Activated CD4-positive, alpha-beta memory T cell treated with anti-CD3 and anti-CD28 coated beads for 36 hours (primary cell): ENCODE measurements at regions of chr2 and their contacts with region 1.

Region 1: DNA sequence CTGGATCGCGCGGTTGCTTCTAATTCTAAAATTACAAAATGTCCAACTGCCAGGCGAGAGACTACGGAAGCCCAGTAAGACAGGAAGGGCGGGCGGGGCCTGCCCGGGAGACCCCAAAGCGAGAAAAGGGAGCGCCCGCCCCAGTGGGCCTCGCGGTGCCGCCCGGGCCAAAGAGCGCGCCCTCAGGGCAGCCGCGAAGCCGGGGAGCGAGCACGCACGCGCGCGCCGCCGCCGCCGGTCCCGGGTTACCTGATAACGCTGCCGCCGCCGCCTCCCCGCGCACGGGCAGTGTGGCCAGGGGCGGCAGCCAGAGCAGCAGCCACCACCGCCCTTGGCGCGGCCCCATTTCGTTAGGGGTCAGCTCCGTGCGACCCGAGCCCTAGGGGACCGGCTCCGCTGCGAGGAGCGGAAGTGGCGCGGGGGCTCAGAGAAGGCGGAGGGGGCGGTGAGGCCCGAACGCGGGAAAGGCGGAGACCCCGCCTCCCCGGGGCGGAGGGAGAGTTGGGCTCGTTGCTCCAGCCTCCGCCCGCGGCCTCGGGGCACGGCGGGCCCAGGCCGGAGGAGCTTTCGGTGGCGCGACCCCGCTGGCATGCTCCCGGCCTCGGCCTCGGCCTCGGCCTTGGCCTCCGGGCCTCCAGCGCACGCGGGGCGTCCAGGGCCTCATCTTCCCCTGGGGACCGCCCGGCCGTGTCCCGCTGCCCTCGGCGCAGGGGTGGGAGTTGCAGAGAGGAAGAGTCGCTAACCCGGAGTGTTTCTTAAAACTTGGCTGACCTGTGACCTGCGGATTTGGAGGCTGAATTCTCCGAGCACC is at the start of gene NEMP2:
- DNase-seq: peak; percentile 86
- H3K4me3 Mint-ChIP-seq: peak within 1 kb of the TSS; percentile 95
- H3K27ac Mint-ChIP-seq: peak within 1 kb of the TSS; percentile 99
- H3K4me1 Mint-ChIP-seq: peaks cover 57% of the 10 kb centered on the region
- H3K27me3 Mint-ChIP-seq: no peaks in the 10 kb centered on the region
- total RNA-seq, gene NEMP2: 28.8 to 30.0 TPM

Region 2: GRCh38 chr2:189762551-189763298 is 771.8 kb before region 1 on chr2 and contains the start of gene OSGEPL1:
- CTCF ChIA-PET with region 1: no interaction called
- POLR2A ChIA-PET with region 1: no interaction called
- intact Hi-C with region 1: loop called (anchors 5 kb)
- DNase-seq: peak; percentile 95
- H3K4me3 Mint-ChIP-seq: peak within 1 kb of the TSS; percentile 91
- H3K27ac Mint-ChIP-seq: peak within 1 kb of the TSS; percentile 96
- H3K4me1 Mint-ChIP-seq: peaks cover 9% of the 10 kb centered on the region
- H3K27me3 Mint-ChIP-seq: no peaks in the 10 kb centered on the region
- total RNA-seq, gene OSGEPL1: 11.1 to 11.7 TPM

Region 3: DNA sequence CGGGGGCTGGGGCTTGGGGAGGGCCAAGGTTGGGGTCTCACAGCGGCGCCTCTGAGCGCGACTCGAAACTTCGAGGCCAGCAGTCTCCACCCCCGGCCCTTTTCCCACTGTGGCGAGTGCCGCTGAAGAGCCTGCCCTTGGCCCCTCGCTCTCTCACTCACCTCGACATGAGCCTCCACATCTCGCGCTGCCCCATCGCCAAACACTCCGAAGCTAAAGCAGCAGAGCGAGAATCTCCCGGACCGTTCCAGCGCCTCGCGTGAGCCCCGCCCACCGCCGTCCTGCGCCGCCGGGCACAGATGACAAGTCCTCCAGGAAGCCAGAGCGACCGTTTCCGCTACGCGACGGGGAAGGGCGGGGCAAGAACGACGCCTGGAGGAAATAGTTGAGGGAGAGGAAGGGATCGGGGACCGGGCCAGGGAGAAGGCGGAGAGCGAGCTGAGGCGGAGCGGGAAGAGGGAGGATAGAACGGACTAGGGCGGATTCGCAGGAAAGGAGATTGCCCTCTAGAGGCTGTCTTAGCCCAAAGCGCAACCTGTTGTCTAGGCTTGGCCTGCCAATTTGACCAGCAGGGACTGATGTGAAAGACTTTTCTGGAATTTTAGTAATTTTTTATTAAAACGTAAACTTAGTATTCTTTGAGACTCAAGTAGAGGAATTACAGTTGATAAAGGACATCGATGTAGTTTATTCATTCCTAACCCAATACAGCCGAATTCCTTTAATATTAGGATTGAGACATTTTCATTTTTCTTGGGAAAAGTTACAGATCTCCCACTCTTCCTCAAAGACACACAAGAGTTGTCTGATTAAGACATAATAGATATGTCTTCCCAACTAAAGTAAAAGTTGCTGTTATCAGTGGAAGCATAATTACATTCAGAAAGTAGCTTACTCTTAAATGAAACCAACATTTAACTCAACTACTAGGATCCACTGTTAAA is 214.7 kb before region 1 on chr2 and contains the start of gene HIBCH:
- CTCF ChIA-PET with region 1: no interaction called
- POLR2A ChIA-PET with region 1: interaction called, 3 read pairs
- intact Hi-C with region 1: loop called (anchors 1 kb)
- DNase-seq: peak; percentile 96
- H3K4me3 Mint-ChIP-seq: peak within 1 kb of the TSS; percentile 87
- H3K27ac Mint-ChIP-seq: peak within 1 kb of the TSS; percentile 94
- H3K4me1 Mint-ChIP-seq: peaks cover 52% of the 10 kb centered on the region
- H3K27me3 Mint-ChIP-seq: no peaks in the 10 kb centered on the region
- total RNA-seq, gene HIBCH: 33.9 to 37.8 TPM

Region 4: DNA sequence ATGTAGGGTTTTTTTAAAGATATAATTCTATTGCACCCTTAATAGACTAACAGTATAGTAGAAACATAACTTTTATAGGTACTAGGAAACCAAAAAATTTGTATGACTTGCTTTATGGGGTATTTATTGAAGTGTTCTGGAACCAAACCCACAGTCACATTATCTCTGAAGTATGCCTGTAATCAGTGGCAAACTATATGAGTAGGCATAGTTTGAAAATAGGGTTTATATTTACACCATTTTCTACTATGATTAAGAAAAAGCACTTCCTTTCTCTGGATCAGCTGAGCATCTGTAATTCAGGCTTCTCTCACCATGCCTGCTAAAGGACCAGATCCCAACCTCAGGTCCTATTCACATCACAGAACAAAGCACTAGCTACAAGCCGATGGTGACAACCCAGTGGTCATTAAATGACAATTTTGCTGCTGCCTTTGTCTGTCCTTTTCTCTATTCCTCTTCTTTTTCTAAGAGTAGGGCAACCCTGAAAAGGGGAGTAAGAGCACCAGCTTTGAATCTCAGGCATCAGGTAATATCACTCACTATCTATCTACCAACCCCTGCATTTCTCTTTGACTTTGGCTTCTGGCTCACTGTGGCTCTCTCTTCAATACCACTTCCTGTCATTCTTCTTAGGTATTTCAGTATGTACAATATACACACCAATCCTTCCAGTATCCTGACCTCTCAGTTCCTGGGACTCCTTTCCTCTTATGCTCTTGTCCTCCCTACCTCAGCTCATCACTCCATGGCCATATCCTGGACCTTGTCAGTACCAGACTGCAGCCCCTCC is 14.3 kb before region 1 on chr2:
- CTCF ChIA-PET with region 1: interaction called, 4 read pairs
- POLR2A ChIA-PET with region 1: interaction called, 4 read pairs
- intact Hi-C with region 1: loop called (anchors 1 kb)
- DNase-seq: no peak
- H3K4me3 Mint-ChIP-seq: no peak overlapping the region
- H3K27ac Mint-ChIP-seq: peak overlapping the region; percentile 33
- H3K4me1 Mint-ChIP-seq: peaks cover 48% of the 10 kb centered on the region
- H3K27me3 Mint-ChIP-seq: no peaks in the 10 kb centered on the region

Region 5: GRCh38 chr2:190648289-190649034 is 113.9 kb after region 1 on chr2:
- CTCF ChIA-PET with region 1: no interaction called
- POLR2A ChIA-PET with region 1: interaction called, 3 read pairs
- intact Hi-C with region 1: loop called (anchors 1 kb)
- DNase-seq: peak; percentile 85
- H3K4me3 Mint-ChIP-seq: peak overlapping the region; percentile 75
- H3K27ac Mint-ChIP-seq: peak overlapping the region; percentile 82
- H3K4me1 Mint-ChIP-seq: peaks cover 38% of the 10 kb centered on the region
- H3K27me3 Mint-ChIP-seq: no peaks in the 10 kb centered on the region

Region 6: GRCh38 chr2:190791347-190791975 is 256.9 kb after region 1 on chr2:
- CTCF ChIA-PET with region 1: no interaction called
- POLR2A ChIA-PET with region 1: no interaction called
- intact Hi-C with region 1: loop called (anchors 5 kb)
- DNase-seq: peak; percentile 73
- H3K4me3 Mint-ChIP-seq: no peak overlapping the region
- H3K27ac Mint-ChIP-seq: peak overlapping the region; percentile 61
- H3K4me1 Mint-ChIP-seq: peaks cover 55% of the 10 kb centered on the region
- H3K27me3 Mint-ChIP-seq: no peaks in the 10 kb centered on the region

Region 7: DNA sequence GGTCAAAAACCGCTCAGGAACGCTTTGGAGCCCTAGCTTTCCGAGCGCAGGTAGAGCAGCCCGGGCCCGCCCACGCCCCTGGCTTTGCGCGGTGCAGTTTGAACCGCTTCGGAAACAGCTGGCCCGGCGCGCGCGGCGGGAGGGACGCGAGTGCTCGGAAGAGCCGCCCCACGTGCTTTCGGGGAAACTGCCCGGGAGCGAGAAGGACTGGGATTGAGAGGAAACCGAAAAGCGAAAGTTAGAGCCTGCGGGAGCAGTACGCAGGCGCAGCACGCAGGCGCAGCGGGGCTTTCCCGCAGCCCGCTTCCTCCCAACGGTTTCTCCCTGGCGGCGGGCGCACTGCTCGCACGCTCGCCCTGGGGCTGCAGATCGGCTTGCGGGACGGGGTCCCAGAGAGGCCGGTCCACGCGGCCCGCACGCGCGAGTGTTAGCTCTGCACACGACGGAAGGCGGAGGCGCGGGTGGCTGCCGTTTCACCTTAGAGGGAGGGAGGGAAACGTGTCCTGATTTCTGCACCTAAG is 485.8 kb after region 1 on chr2:
- CTCF ChIA-PET with region 1: no interaction called
- POLR2A ChIA-PET with region 1: no interaction called
- intact Hi-C with region 1: loop called (anchors 5 kb)
- DNase-seq: peak; percentile 97
- H3K4me3 Mint-ChIP-seq: no peak overlapping the region
- H3K27ac Mint-ChIP-seq: no peak overlapping the region
- H3K4me1 Mint-ChIP-seq: peaks cover 34% of the 10 kb centered on the region
- H3K27me3 Mint-ChIP-seq: peaks cover 2% of the 10 kb centered on the region